ENCODE measurements at regions of chr14 and their contacts with region 1.

Region 1: GRCh38 chr14:70809543-70810244 is 381 bp upstream of the MAP3K9 start:
- DNase-seq: peak; percentile 98
- ATAC-seq: peak; percentile 96
- H3K4me3 ChIP-seq: peak overlapping the region; percentile 64
- H3K27ac ChIP-seq: no peak overlapping the region
- H3K4me1 ChIP-seq: peaks cover 16% of the 10 kb centered on the region
- H3K27me3 ChIP-seq: peaks cover 17% of the 10 kb centered on the region
- CTCF ChIP-seq: no peak

Region 2: GRCh38 chr14:70972107-70972976 is 162.6 kb after region 1 on chr14:
- intact Hi-C with region 1: loop called (anchors 10 kb)
- DNase-seq: peak; percentile 68
- ATAC-seq: peak; percentile 95
- H3K4me3 ChIP-seq: no peak overlapping the region
- H3K27ac ChIP-seq: no peak overlapping the region
- H3K4me1 ChIP-seq: no peaks in the 10 kb centered on the region
- H3K27me3 ChIP-seq: no peaks in the 10 kb centered on the region
- CTCF ChIP-seq: peak; percentile 97